ENCODE measurements at regions of chr11 and their contacts with region 1.

Region 1: DNA sequence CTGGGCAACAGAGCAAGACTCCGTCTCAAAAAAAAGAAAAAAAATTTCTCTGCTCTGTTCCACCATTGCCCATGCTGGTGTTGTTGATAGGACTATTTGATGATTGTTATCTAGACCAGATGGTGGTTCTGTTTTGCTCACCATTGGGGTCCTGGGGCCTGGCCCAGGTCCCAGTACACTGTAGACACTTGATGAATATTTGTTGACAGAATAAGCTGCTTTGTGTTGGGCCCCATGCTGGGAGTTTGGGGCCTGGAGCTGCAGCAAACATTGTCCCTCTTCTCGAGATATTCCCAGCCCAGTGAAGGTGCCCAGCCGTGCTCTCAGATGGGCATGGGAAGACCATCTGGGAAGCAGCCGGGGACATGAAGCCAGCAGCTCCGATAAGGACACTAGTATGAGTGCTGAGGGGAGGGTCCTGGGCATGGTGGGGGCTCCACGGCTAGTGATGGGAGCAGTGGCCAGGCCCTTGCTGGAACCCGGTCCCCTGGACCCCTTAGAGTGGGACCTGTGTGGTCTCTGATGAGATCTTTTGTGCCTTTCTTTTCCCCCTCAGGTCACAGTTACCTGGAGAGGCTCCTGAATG is 13.6 kb downstream of the INCENP start:
- DNase-seq: no peak
- ATAC-seq: no peak
- H3K4me3 ChIP-seq: no peak overlapping the region
- H3K27ac ChIP-seq: no peak overlapping the region
- H3K4me1 ChIP-seq: peaks cover 3 to 11% of the 10 kb centered on the region in 2 experiments; a peak in 2 of 5 replicates
- H3K27me3 ChIP-seq: no peaks in the 10 kb centered on the region
- CTCF ChIP-seq: no peak
- EP300 ChIP-seq: no peak
- POLR2A ChIP-seq: no peak
- RAD21 ChIP-seq: no peak

Region 2: GRCh38 chr11:62123669-62124185 is 13.6 kb before region 1 on chr11 and contains the start of gene INCENP:
- CTCF ChIA-PET with region 1: no interaction called
- POLR2A ChIA-PET with region 1: interaction called, 14 read pairs
- in situ Hi-C with region 1: no loop called
- intact Hi-C with region 1: no loop called
- DNase-seq: peak; percentile 95 to 99 (median 97)
- ATAC-seq: peak; percentile 99
- H3K4me3 ChIP-seq: peak within 1 kb of the TSS; percentile 85
- H3K27ac ChIP-seq: peak within 1 kb of the TSS; percentile 93
- H3K4me1 ChIP-seq: peaks cover 11 to 16% of the 10 kb centered on the region in 2 experiments; a peak in 4 of 5 replicates
- H3K27me3 ChIP-seq: no peaks in the 10 kb centered on the region
- CTCF ChIP-seq: no peak
- EP300 ChIP-seq: no peak
- POLR2A ChIP-seq: peak; percentile 80
- RAD21 ChIP-seq: no peak
- polyA plus RNA-seq, gene INCENP: 1.1 to 3.3 TPM

Measured in K562 (cell line).